Endothelial cell of umbilical vein (primary cell): ENCODE measurements at regions of chr6 and their contacts with region 1.

Region 1: DNA sequence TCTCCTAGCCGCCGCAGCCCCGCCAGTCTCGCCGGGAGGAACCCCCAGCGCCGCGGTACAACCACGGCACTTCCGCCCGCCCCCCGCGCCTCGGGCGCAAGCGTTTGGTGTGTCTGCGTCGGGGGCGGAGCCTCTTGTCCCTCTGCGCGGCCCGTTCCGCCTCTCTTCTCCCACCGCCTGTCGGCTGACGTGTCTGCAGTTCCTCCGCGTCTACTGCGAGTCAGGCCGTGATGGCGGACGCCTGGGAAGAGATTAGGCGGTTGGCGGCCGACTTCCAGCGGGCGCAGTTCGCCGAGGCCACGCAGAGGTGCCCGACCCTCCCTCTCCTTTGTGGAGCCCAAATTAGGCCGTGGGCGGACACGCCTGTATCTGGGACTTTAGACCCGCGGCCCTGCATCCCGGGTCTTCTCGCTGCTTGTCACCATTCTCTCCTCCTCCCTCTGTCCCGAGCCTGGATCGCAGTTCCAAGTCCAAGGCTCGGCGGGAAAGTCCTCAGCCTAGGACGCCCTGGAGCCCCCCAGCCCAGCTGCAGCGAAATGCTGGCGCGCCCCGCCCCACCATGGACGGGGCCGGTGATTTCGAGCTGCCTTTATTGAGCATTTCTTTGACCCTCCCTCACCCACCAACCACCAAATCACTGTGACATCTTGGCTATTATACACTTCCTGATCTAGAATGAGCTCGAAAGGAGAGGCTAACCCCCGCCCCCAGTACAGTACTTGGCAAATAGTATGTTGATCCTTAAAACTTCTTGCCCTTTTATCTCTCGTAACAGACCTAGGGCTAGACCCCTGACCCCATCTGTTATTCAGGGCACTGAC is at the start of gene UFL1:
- DNase-seq: peak; percentile 95
- H3K4me3 ChIP-seq: peak within 1 kb of the TSS; percentile 63 to 99 (median 98)
- H3K27ac ChIP-seq: peak within 1 kb of the TSS; percentile 92
- H3K4me1 ChIP-seq: peaks cover 16% of the 10 kb centered on the region
- H3K27me3 ChIP-seq: no peaks in the 10 kb centered on the region
- CTCF ChIP-seq: no peak
- POLR2A ChIP-seq: peak; percentile 98
- total RNA-seq, gene UFL1: 18.3 and 19.6 TPM in 2 replicates

Region 2: GRCh38 chr6:95577304-95578105 is 944.3 kb before region 1 on chr6 and contains the start of gene MANEA:
- CTCF ChIA-PET with region 1: no interaction called
- POLR2A ChIA-PET with region 1: no interaction called
- dilution Hi-C with region 1: no loop called
- intact Hi-C with region 1: loop called (anchors 2 kb)
- DNase-seq: peak; percentile 84
- H3K4me3 ChIP-seq: peak within 1 kb of the TSS; percentile 57 to 100 (median 98)
- H3K27ac ChIP-seq: peak within 1 kb of the TSS; percentile 86
- H3K4me1 ChIP-seq: peaks cover 30% of the 10 kb centered on the region
- H3K27me3 ChIP-seq: no peaks in the 10 kb centered on the region
- CTCF ChIP-seq: peak in 1 of 2 donors; percentile 0
- POLR2A ChIP-seq: peak; percentile 77
- total RNA-seq, gene MANEA: 17.7 and 18.5 TPM in 2 replicates

Region 3: DNA sequence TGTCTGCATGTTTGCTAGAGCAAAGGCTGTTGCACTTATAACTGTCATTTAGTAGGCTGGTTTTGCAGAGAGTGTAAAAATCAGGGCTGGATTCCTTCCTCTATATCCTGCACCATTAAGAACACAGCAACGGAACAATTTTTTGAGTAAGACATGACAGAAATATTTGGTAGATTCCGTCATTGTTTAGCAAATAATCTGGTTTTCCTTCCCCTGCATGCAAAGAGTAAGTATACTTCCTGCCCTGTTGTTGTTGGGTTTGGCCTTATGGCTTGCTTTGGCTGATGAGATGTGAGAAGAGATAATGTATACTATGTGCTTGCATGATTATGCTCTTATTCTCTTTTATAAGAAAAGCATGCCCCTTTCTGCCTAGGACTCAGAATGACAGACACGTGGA is 920.7 kb before region 1 on chr6:
- CTCF ChIA-PET with region 1: no interaction called
- POLR2A ChIA-PET with region 1: no interaction called
- dilution Hi-C with region 1: no loop called
- intact Hi-C with region 1: loop called (anchors 10 kb)
- DNase-seq: peak; percentile 61
- H3K4me3 ChIP-seq: no peak overlapping the region
- H3K27ac ChIP-seq: peak overlapping the region; percentile 17
- H3K4me1 ChIP-seq: peaks cover 21% of the 10 kb centered on the region
- H3K27me3 ChIP-seq: no peaks in the 10 kb centered on the region
- CTCF ChIP-seq: no peak
- POLR2A ChIP-seq: no peak

Region 4: GRCh38 chr6:96491926-96492325 is 29.9 kb before region 1 on chr6:
- CTCF ChIA-PET with region 1: no interaction called
- POLR2A ChIA-PET with region 1: no interaction called
- dilution Hi-C with region 1: no loop called
- intact Hi-C with region 1: no loop called
- DNase-seq: no peak
- H3K4me3 ChIP-seq: no peak overlapping the region
- H3K27ac ChIP-seq: no peak overlapping the region
- H3K4me1 ChIP-seq: no peaks in the 10 kb centered on the region
- H3K27me3 ChIP-seq: no peaks in the 10 kb centered on the region
- CTCF ChIP-seq: no peak
- POLR2A ChIP-seq: no peak

Region 5: DNA sequence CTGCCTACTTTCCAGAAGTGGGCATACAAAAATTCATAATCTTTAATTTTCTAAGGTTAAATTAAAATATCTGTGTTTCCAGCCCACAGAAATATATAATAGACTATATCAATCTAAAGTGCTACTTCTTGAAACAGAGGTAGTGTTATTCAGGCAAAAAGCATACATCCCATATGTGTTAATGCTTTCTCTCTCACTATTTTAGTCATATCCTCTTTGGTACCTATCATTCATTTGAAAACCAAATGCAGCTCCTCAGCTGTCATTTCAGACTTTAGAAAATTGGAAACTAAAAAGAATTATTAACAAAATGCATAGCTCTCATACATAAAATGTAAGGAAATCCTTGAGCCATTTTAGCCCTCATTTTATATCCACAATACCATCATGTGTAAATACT is 42.0 kb after region 1 on chr6:
- CTCF ChIA-PET with region 1: no interaction called
- POLR2A ChIA-PET with region 1: no interaction called
- dilution Hi-C with region 1: no loop called
- intact Hi-C with region 1: no loop called
- DNase-seq: no peak
- H3K4me3 ChIP-seq: no peak overlapping the region
- H3K27ac ChIP-seq: no peak overlapping the region
- H3K4me1 ChIP-seq: no peaks in the 10 kb centered on the region
- H3K27me3 ChIP-seq: no peaks in the 10 kb centered on the region
- CTCF ChIP-seq: no peak
- POLR2A ChIP-seq: no peak

Region 6: DNA sequence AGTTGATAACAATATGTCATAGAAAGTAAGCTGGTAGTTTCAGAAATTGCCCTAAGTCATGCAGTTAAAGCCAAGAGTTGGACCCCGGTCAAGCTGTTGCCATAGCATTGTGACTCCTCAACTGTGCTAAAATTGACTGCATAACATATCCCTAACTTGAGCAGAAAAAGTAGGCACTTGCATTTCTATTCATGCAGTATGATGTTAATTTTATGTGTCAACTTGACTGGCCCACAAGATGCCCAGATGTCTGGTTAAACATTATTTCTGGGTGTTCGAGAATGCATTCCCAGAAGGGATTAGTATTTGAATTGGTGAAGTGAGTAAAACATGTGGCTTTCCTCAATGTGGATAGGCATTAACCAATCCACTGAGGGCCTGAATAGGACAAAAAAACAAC is 179.1 kb after region 1 on chr6:
- CTCF ChIA-PET with region 1: no interaction called
- POLR2A ChIA-PET with region 1: no interaction called
- dilution Hi-C with region 1: no loop called
- intact Hi-C with region 1: no loop called
- DNase-seq: no peak
- H3K4me3 ChIP-seq: no peak overlapping the region
- H3K27ac ChIP-seq: no peak overlapping the region
- H3K4me1 ChIP-seq: no peaks in the 10 kb centered on the region
- H3K27me3 ChIP-seq: no peaks in the 10 kb centered on the region
- CTCF ChIP-seq: no peak
- POLR2A ChIP-seq: no peak

Region 7: DNA sequence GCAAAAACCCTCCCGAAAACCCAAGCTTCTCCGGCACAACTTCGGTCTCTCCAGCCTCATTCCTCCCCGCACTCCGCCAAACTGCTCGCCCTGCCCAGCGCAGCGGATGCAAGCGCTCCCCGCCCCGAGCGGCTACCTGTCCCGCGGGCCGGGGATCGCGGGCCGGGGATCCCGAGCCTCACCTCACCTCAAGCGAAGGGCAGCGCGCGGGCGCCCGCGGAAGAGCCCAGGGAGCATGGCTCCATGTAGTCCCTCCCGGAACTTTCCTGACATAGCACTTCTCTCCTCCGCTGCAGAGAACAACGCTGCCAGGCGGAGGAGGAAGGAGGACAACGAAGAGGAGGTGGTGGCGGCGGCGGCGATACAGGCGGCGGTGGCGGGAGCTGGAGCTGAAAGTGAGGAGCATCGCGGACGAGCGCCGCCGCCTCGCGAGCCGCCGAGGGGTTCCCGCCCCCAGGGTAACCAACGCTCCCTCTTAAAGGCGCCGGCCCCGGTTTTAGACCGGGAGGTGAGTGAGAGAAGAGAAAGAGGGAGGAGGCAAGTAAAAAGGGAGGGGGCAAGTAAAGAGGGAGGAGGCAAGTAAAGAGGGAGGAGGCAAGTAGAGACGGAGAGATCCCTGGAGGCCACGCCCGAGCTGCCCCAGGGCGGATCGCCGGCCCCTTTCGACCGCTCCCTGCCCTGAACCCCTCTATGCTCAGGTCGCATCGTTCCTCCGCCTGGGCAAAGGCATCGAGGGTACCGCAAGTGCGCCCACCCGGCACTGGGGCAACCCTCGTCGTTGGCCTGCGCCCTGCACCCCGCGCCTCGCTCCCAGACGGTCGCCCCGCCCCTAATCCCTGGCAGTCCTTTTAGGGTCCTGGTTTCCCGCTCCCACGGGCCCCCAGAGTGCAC is 315.5 kb after region 1 on chr6 and contains the start of gene GPR63:
- CTCF ChIA-PET with region 1: no interaction called
- POLR2A ChIA-PET with region 1: no interaction called
- dilution Hi-C with region 1: no loop called
- intact Hi-C with region 1: loop called (anchors 5 kb)
- DNase-seq: peak; percentile 24
- H3K4me3 ChIP-seq: peak within 1 kb of the TSS; percentile 51 to 85 (median 64)
- H3K27ac ChIP-seq: no peak within 1 kb of the TSS
- H3K4me1 ChIP-seq: peaks cover 10% of the 10 kb centered on the region
- H3K27me3 ChIP-seq: peaks cover 19 to 65% of the 10 kb centered on the region in 2 experiments
- CTCF ChIP-seq: no peak
- POLR2A ChIP-seq: no peak
- total RNA-seq, gene GPR63: 0.09 and 0.13 TPM in 2 replicates